Activated naive CD4-positive, alpha-beta T cell treated with anti-CD3 and anti-CD28 coated beads for 36 hours (primary cell): ENCODE measurements at regions of chr13 and their contacts with region 1.

Region 1: GRCh38 chr13:73417015-73417623 is 358.3 kb downstream of the KLF5 start:
- DNase-seq: no peak
- H3K4me3 Mint-ChIP-seq: no peak overlapping the region
- H3K27ac Mint-ChIP-seq: no peak overlapping the region
- H3K4me1 Mint-ChIP-seq: no peaks in the 10 kb centered on the region
- H3K27me3 Mint-ChIP-seq: no peaks in the 10 kb centered on the region

Region 2: GRCh38 chr13:71979616-71980015 is 1437.5 kb before region 1 on chr13:
- CTCF ChIA-PET with region 1: no interaction called
- intact Hi-C with region 1: no loop called
- DNase-seq: no peak
- H3K4me3 Mint-ChIP-seq: no peak overlapping the region
- H3K27ac Mint-ChIP-seq: no peak overlapping the region
- H3K4me1 Mint-ChIP-seq: no peaks in the 10 kb centered on the region
- H3K27me3 Mint-ChIP-seq: no peaks in the 10 kb centered on the region

Region 3: GRCh38 chr13:72839831-72840426 is 577.2 kb before region 1 on chr13:
- CTCF ChIA-PET with region 1: no interaction called
- intact Hi-C with region 1: loop called (anchors 1 kb)
- DNase-seq: peak; percentile 63
- H3K4me3 Mint-ChIP-seq: no peak overlapping the region
- H3K27ac Mint-ChIP-seq: no peak overlapping the region
- H3K4me1 Mint-ChIP-seq: no peaks in the 10 kb centered on the region
- H3K27me3 Mint-ChIP-seq: no peaks in the 10 kb centered on the region

Region 4: DNA sequence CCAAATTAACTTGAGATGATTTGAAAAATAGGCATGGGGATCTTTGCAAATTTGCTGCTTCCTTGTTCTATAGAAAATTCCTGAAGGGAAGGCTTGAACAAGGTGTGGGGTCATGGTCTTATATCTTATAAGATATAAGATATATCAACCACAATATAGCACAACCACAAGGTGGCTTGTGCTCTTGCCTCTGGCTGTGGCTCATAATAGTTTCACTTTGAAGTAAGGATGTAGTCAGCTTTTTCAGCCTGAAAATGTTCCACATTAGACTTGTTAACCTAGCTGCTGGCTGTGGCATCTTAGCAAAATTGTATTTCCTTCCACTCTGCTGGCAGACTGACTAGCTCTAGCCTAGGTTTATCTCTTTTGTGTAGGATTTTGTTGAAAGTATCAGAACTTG is 188.6 kb before region 1 on chr13:
- CTCF ChIA-PET with region 1: interaction called, 3 read pairs
- intact Hi-C with region 1: loop called (anchors 1 kb)
- DNase-seq: peak; percentile 37
- H3K4me3 Mint-ChIP-seq: no peak overlapping the region
- H3K27ac Mint-ChIP-seq: peak overlapping the region; percentile 36
- H3K4me1 Mint-ChIP-seq: peaks cover 42% of the 10 kb centered on the region
- H3K27me3 Mint-ChIP-seq: no peaks in the 10 kb centered on the region

Region 5: DNA sequence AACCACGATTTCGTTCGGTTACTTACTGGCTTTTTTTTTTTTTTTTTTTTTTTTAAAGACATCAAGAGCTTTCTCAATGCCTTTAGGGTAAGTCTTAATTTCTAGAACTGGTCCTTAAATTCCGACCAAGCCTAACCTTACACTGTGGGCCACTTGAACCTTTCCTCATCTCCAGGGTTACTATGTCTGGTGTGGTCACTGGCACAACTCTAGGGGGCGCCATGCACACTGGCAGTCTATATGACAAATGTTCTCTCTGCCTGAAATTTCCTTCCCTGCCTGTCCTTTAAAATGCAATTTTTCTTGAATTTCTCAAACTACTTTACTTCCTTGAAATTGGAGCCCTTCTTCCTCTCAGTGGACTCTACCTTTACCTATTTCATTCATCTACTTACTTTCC is 130.9 kb before region 1 on chr13:
- CTCF ChIA-PET with region 1: no interaction called
- intact Hi-C with region 1: no loop called
- DNase-seq: no peak
- H3K4me3 Mint-ChIP-seq: no peak overlapping the region
- H3K27ac Mint-ChIP-seq: no peak overlapping the region
- H3K4me1 Mint-ChIP-seq: no peaks in the 10 kb centered on the region
- H3K27me3 Mint-ChIP-seq: no peaks in the 10 kb centered on the region

Region 6: GRCh38 chr13:73544175-73544574 is 127.1 kb after region 1 on chr13:
- CTCF ChIA-PET with region 1: no interaction called
- intact Hi-C with region 1: no loop called
- DNase-seq: no peak
- H3K4me3 Mint-ChIP-seq: no peak overlapping the region
- H3K27ac Mint-ChIP-seq: no peak overlapping the region
- H3K4me1 Mint-ChIP-seq: no peaks in the 10 kb centered on the region
- H3K27me3 Mint-ChIP-seq: no peaks in the 10 kb centered on the region

Region 7: DNA sequence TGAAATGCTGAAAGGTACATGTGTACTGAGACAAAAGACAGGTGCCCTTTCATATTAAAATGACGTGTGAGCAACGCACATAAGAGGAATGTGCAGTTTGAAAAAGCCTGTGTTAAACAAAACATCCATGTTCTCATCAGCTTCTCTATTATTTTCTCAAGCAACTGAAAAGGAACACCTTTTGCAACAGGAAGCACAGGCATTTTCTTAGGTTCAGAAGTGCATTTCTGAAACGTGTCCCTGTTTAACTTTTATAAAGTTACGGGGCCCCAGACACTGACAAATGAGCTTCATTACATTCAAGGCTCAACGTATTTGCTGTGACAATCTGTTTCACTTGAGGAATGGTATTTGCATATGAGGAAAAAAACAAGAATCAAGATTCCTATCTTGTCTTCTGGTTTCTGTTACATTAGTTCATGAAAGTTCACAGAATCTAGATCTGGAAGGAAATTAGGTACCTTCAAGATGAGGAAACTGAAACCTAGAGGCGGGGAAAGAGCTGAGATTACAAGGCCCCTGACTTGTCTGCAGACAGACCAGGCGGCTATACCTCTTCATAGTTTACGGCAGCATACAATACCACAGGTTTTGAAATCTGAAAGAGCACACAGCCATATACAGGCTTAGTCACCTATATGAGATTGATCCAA is 285.4 kb after region 1 on chr13:
- CTCF ChIA-PET with region 1: no interaction called
- intact Hi-C with region 1: loop called (anchors 2 kb)
- DNase-seq: peak; percentile 61
- H3K4me3 Mint-ChIP-seq: peak overlapping the region; percentile 62
- H3K27ac Mint-ChIP-seq: peak overlapping the region; percentile 71
- H3K4me1 Mint-ChIP-seq: peaks cover 41% of the 10 kb centered on the region
- H3K27me3 Mint-ChIP-seq: no peaks in the 10 kb centered on the region

Region 8: GRCh38 chr13:74573654-74574053 is 1156.5 kb after region 1 on chr13:
- CTCF ChIA-PET with region 1: no interaction called
- intact Hi-C with region 1: no loop called
- DNase-seq: peak; percentile 57
- H3K4me3 Mint-ChIP-seq: no peak overlapping the region
- H3K27ac Mint-ChIP-seq: no peak overlapping the region
- H3K4me1 Mint-ChIP-seq: peaks cover 10% of the 10 kb centered on the region
- H3K27me3 Mint-ChIP-seq: peaks cover 20% of the 10 kb centered on the region